Mammary epithelial cell (primary cell): ENCODE measurements at regions of chr2 and their contacts with region 1.

Region 1: GRCh38 chr2:138827426-138828054 is 47.4 kb upstream of the NXPH2 start:
- DNase-seq: peak; percentile 54
- H3K4me3 ChIP-seq: no peak overlapping the region
- H3K27ac ChIP-seq: no peak overlapping the region
- H3K4me1 ChIP-seq: no peaks in the 10 kb centered on the region
- H3K27me3 ChIP-seq: no peaks in the 10 kb centered on the region
- CTCF ChIP-seq: peak; percentile 64 to 71

Region 2: GRCh38 chr2:137865954-137866540 is 961.5 kb before region 1 on chr2:
- CTCF ChIA-PET with region 1: interaction called, 6 read pairs
- dilution Hi-C with region 1: no loop called
- in situ Hi-C with region 1: no loop called
- intact Hi-C with region 1: loop called (anchors 1 kb)
- DNase-seq: peak; percentile 24
- H3K4me3 ChIP-seq: no peak overlapping the region
- H3K27ac ChIP-seq: no peak overlapping the region
- H3K4me1 ChIP-seq: no peaks in the 10 kb centered on the region
- H3K27me3 ChIP-seq: peaks cover 2% of the 10 kb centered on the region
- CTCF ChIP-seq: peak; percentile 73 to 81

Region 3: GRCh38 chr2:137910641-137911040 is 916.9 kb before region 1 on chr2:
- CTCF ChIA-PET with region 1: no interaction called
- dilution Hi-C with region 1: no loop called
- in situ Hi-C with region 1: loop called in 1 of 2 experiments (anchors 10 kb)
- intact Hi-C with region 1: loop called (anchors 1 kb)
- DNase-seq: no peak
- H3K4me3 ChIP-seq: no peak overlapping the region
- H3K27ac ChIP-seq: no peak overlapping the region
- H3K4me1 ChIP-seq: no peaks in the 10 kb centered on the region
- H3K27me3 ChIP-seq: no peaks in the 10 kb centered on the region
- CTCF ChIP-seq: peak; percentile 52 to 69